GM12878 (cell line): ENCODE measurements at regions of chr11 and their contacts with region 1.

Region 1: GRCh38 chr11:67167086-67167485 is 48.0 kb downstream of the KDM2A start:
- DNase-seq: no peak
- ATAC-seq: no peak
- H3K4me3 ChIP-seq: no peak overlapping the region
- H3K27ac ChIP-seq: no peak overlapping the region
- H3K4me1 ChIP-seq: peaks cover 17% of the 10 kb centered on the region
- H3K27me3 ChIP-seq: no peaks in the 10 kb centered on the region
- CTCF ChIP-seq: no peak
- EP300 ChIP-seq: no peak
- POLR2A ChIP-seq: no peak
- RAD21 ChIP-seq: no peak

Region 2: GRCh38 chr11:67099831-67100324 is 67.2 kb before region 1 on chr11:
- CTCF ChIA-PET with region 1: interaction called, 10 read pairs
- POLR2A ChIA-PET with region 1: no interaction called
- RAD21 ChIA-PET with region 1: interaction called, 12 read pairs
- SMC1A ChIA-PET with region 1: interaction called, 8 read pairs
- in situ Hi-C with region 1: no loop called
- intact Hi-C with region 1: loop called (anchors 5 kb)
- DNase-seq: peak; percentile 63
- ATAC-seq: peak; percentile 88
- H3K4me3 ChIP-seq: peak overlapping the region; percentile 6; the same call in 1 of the 2 replicates
- H3K27ac ChIP-seq: peak overlapping the region; percentile 90
- H3K4me1 ChIP-seq: peaks cover 24% of the 10 kb centered on the region
- H3K27me3 ChIP-seq: no peaks in the 10 kb centered on the region
- CTCF ChIP-seq: no peak
- EP300 ChIP-seq: no peak
- POLR2A ChIP-seq: no peak
- RAD21 ChIP-seq: no peak

Region 3: DNA sequence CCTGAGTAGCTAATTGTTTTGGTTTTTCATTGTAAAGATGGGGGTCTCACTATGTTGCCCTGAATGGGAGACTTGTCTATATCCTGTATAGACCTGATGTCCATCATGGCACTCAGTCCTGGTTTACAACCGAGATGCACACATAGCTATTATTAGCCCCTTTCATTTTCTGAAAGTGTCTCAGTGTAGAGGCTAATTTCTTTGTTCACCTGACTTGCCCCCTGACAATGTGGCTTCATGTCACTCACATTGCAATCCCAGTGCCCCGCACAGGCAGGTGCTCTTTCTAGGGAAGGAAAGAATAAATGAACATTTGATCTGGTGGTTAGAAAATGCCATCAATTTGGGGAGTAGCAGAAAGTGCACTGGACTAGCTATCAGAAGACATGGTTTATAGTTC is 61.1 kb before region 1 on chr11:
- CTCF ChIA-PET with region 1: interaction called, 10 read pairs
- POLR2A ChIA-PET with region 1: interaction called, 3 read pairs
- RAD21 ChIA-PET with region 1: no interaction called
- SMC1A ChIA-PET with region 1: no interaction called
- in situ Hi-C with region 1: no loop called
- intact Hi-C with region 1: no loop called
- DNase-seq: no peak
- ATAC-seq: peak; percentile 73
- H3K4me3 ChIP-seq: no peak overlapping the region
- H3K27ac ChIP-seq: peak overlapping the region; percentile 46
- H3K4me1 ChIP-seq: peaks cover 17% of the 10 kb centered on the region
- H3K27me3 ChIP-seq: no peaks in the 10 kb centered on the region
- CTCF ChIP-seq: no peak
- EP300 ChIP-seq: no peak
- POLR2A ChIP-seq: no peak
- RAD21 ChIP-seq: no peak

Region 4: DNA sequence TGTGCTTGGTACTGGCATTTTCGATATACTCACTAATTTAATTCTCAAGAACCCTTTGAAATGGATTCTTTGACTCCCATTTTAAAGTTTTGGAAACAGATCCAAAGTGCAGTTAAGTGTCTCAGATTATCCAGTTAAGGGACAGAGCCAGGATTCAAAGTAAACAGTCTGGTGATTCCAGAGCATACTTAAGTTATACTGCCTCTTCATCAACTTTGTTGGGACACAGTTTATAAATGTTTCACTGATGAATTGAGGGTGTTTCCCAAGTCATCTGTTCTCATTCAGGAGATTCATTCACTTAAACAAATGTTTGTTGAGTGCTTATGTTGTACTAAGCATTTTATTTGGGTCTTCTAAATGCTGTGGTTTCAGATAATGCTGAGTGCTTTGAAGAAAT is 30.9 kb before region 1 on chr11:
- CTCF ChIA-PET with region 1: no interaction called
- POLR2A ChIA-PET with region 1: no interaction called
- RAD21 ChIA-PET with region 1: no interaction called
- SMC1A ChIA-PET with region 1: no interaction called
- in situ Hi-C with region 1: no loop called
- intact Hi-C with region 1: no loop called
- DNase-seq: no peak
- ATAC-seq: no peak
- H3K4me3 ChIP-seq: no peak overlapping the region
- H3K27ac ChIP-seq: no peak overlapping the region
- H3K4me1 ChIP-seq: no peaks in the 10 kb centered on the region
- H3K27me3 ChIP-seq: no peaks in the 10 kb centered on the region
- CTCF ChIP-seq: no peak
- EP300 ChIP-seq: no peak
- POLR2A ChIP-seq: no peak
- RAD21 ChIP-seq: no peak